WTC11 (cell line): ENCODE measurements at regions of chr1 and their contacts with region 1.

Region 1: DNA sequence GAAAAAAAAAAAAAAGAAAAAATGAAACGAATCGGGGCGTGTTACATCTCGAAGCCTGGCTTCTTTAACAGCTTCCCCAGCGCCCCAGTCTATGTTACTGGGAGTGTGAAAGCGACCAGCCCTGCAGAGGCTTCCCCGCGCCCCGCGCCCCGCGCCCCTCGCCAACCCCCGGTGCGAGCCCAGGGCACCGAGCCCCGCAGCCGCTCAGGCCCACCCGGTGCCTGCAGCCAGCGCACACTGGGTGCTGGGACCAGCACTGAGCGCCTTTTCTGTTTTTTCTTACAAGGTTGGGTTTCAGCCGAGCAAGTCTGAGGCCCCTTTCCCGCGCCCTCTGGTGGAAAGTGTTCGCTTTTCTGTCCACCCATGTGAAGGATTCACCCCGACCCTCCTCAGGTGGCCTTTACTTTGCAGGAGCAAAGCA is 42.1 kb upstream of the ZNF496 start:
- DNase-seq: peak; percentile 83
- ATAC-seq: peak; percentile 53
- H3K4me3 Mint-ChIP-seq: peak overlapping the region; percentile 13; the same call in 1 of the 2 replicates
- H3K27ac Mint-ChIP-seq: peak overlapping the region; percentile 26; the same call in 1 of the 2 replicates
- H3K4me1 Mint-ChIP-seq: peaks cover 78% of the 10 kb centered on the region
- H3K27me3 Mint-ChIP-seq: no peaks in the 10 kb centered on the region
- CTCF ChIP-seq: peak; percentile 23; the same call in 1 of the 2 replicates

Region 2: DNA sequence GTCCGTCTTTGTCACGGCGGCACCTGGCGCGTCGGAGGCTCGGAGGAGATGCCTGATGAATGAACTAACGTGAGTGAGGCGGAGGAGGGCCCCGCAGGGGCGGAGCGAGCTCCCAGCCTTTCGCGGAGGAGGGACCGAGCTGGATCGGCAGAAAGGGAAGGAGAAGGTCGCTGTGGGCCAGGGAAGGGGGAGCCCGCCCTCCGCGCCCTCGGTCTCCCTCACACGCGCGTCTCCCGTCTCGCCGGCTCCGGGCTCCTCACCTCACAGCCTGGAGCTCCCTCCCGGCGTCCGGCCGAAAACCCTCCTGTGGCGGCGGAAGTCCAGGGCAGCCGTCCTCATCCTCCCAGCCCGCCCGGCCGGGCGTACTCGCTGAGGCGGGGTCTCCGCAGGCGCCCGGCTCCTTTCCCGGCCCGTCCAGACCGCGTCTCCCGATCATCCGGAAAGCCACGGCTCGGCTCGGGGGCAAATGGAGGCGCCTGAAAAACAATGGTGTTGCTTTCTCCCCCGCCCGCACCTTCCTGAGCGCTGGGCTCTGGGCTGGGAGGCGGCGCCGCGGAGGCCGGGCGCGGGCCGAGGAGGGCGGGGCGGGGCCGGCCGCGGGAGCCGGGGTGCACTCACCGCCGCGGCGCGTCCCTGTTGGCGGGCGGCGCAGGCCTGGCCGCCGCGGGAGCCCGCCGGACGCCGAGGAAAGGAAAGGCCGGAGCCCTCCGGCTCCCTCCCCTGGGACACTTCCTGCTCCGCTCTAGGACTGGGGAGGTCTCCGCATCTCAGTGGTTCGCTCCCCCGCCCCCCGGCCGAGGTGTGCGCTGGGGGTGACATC is 42.3 kb before region 1 on chr1 and contains the start of gene ZNF496:
- CTCF ChIA-PET with region 1: interaction called, 13 read pairs
- POLR2A ChIA-PET with region 1: no interaction called
- DNase-seq: peak; percentile 93
- ATAC-seq: peak; percentile 81
- H3K4me3 Mint-ChIP-seq: peak within 1 kb of the TSS; percentile 85
- H3K27ac Mint-ChIP-seq: peak within 1 kb of the TSS; percentile 72
- H3K4me1 Mint-ChIP-seq: peaks cover 47% of the 10 kb centered on the region
- H3K27me3 Mint-ChIP-seq: no peaks in the 10 kb centered on the region
- CTCF ChIP-seq: no peak
- total RNA-seq, gene ZNF496: 81.5 to 89.0 TPM (median 88.3 TPM) in 3 replicates

Region 3: GRCh38 chr1:247352175-247352574 is 21.6 kb before region 1 on chr1:
- CTCF ChIA-PET with region 1: interaction called, 11 read pairs
- POLR2A ChIA-PET with region 1: interaction called, 5 read pairs
- DNase-seq: no peak
- ATAC-seq: no peak
- H3K4me3 Mint-ChIP-seq: no peak overlapping the region
- H3K27ac Mint-ChIP-seq: no peak overlapping the region
- H3K4me1 Mint-ChIP-seq: peaks cover 25% of the 10 kb centered on the region
- H3K27me3 Mint-ChIP-seq: peaks cover 40% of the 10 kb centered on the region
- CTCF ChIP-seq: no peak

Region 4: DNA sequence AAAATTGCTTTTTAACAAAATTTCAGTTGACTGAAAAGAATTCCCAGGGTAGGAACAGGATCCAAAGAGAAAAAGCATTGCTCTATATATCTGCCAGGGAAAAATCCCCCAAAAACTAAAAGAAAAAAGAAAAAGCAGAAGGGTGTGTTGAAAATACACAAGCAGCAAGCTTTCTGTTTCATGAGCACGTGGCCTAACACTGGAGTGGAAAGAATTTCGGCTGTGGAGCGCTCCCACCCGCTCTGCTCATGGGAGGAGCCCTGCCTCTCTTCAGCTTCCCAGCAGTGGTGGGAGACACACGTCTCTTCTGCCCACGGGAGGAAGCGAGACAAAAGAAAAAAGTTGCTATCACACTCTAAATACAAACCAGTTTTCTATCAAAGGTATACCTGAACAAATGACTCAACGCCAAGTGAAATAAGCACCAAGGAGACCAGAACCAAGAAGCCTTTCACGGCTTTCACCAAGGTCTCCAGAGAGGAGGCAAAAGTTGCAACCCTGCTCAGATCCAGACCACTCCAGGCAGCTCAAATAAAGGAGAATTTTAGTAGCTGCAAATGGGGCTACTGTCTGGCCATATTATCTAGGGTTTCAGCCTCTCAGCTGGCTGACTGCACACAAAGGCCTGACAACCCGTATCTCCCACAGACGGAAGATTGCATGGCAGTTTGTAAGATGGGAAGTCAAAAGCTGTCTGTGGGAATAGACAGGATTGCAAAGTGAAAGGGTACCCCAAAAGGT is 12.6 kb before region 1 on chr1:
- CTCF ChIA-PET with region 1: interaction called, 25 read pairs
- POLR2A ChIA-PET with region 1: interaction called, 5 read pairs
- DNase-seq: no peak
- ATAC-seq: peak; percentile 46
- H3K4me3 Mint-ChIP-seq: no peak overlapping the region
- H3K27ac Mint-ChIP-seq: no peak overlapping the region
- H3K4me1 Mint-ChIP-seq: peaks cover 30% of the 10 kb centered on the region
- H3K27me3 Mint-ChIP-seq: peaks cover 29% of the 10 kb centered on the region
- CTCF ChIP-seq: no peak

Region 5: DNA sequence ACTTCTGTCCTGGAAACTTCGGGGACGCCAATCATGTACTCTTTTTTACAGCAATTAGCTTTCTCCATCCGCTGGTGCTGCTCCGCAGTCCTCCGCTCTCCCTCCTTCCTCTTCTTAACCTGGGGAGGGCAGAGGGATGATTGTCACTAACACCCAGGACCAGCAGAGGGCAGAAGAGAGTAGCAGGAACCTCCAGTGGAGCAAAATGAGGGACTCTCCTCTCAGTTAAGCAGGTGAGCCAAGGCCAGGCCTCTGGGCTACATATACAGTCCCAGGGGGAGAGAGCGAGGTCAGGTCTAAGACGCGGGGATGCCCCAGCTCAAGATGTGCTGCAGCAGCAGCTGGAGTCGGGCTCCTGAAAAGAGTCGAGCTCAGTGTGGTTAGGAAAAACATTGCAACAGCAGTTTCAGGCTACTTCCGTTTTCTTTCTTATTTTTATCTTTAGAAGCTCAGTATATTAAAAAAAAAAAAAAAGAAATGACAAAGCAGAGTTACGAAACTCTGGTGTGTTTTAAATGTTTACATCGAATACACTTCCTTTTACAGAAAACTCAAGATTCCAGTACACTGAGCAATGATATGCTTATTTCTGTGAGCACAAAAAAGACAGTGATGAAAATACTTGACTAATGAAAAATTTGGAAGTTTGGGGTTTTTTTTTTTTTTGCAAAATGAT is 16.5 kb after region 1 on chr1:
- CTCF ChIA-PET with region 1: interaction called, 59 read pairs
- POLR2A ChIA-PET with region 1: no interaction called
- DNase-seq: peak; percentile 89
- ATAC-seq: peak; percentile 99
- H3K4me3 Mint-ChIP-seq: no peak overlapping the region
- H3K27ac Mint-ChIP-seq: no peak overlapping the region; the same call in 1 of the 2 replicates
- H3K4me1 Mint-ChIP-seq: peaks cover 23% of the 10 kb centered on the region
- H3K27me3 Mint-ChIP-seq: peaks cover 20% of the 10 kb centered on the region
- CTCF ChIP-seq: peak; percentile 91

Region 6: GRCh38 chr1:247448107-247448791 is 74.5 kb after region 1 on chr1:
- CTCF ChIA-PET with region 1: interaction called, 23 read pairs
- POLR2A ChIA-PET with region 1: interaction called, 3 read pairs
- DNase-seq: peak; percentile 74
- ATAC-seq: peak; percentile 95
- H3K4me3 Mint-ChIP-seq: peak overlapping the region; percentile 71
- H3K27ac Mint-ChIP-seq: peak overlapping the region; percentile 67; the same call in 1 of the 2 replicates
- H3K4me1 Mint-ChIP-seq: peaks cover 11% of the 10 kb centered on the region
- H3K27me3 Mint-ChIP-seq: peaks cover 10% of the 10 kb centered on the region
- CTCF ChIP-seq: no peak

Region 7: GRCh38 chr1:247487057-247487456 is 113.3 kb after region 1 on chr1:
- CTCF ChIA-PET with region 1: interaction called, 16 read pairs
- POLR2A ChIA-PET with region 1: no interaction called
- DNase-seq: no peak
- ATAC-seq: peak; percentile 97
- H3K4me3 Mint-ChIP-seq: no peak overlapping the region
- H3K27ac Mint-ChIP-seq: no peak overlapping the region
- H3K4me1 Mint-ChIP-seq: peaks cover 8% of the 10 kb centered on the region
- H3K27me3 Mint-ChIP-seq: no peaks in the 10 kb centered on the region
- CTCF ChIP-seq: no peak